ENCODE measurements at regions of chr11 and their contacts with region 1.

Region 1: GRCh38 chr11:36235750-36236149 is 53.5 kb downstream of the COMMD9 start:
- DNase-seq: no peak
- H3K4me3 ChIP-seq: no peak overlapping the region
- H3K27ac ChIP-seq: no peak overlapping the region
- H3K4me1 ChIP-seq: no peaks in the 10 kb centered on the region
- H3K27me3 ChIP-seq: no peaks in the 10 kb centered on the region
- CTCF ChIP-seq: no peak

Region 2: GRCh38 chr11:36162883-36163434 is 72.8 kb before region 1 on chr11:
- intact Hi-C with region 1: no loop called
- DNase-seq: no peak
- H3K4me3 ChIP-seq: no peak overlapping the region
- H3K27ac ChIP-seq: no peak overlapping the region
- H3K4me1 ChIP-seq: no peaks in the 10 kb centered on the region
- H3K27me3 ChIP-seq: no peaks in the 10 kb centered on the region
- CTCF ChIP-seq: no peak

Region 3: GRCh38 chr11:36218283-36218921 is 17.3 kb before region 1 on chr11:
- intact Hi-C with region 1: loop called (anchors 2 kb)
- DNase-seq: no peak
- H3K4me3 ChIP-seq: no peak overlapping the region
- H3K27ac ChIP-seq: no peak overlapping the region
- H3K4me1 ChIP-seq: no peaks in the 10 kb centered on the region
- H3K27me3 ChIP-seq: no peaks in the 10 kb centered on the region
- CTCF ChIP-seq: no peak